ENCODE measurements at regions of chr3 and their contacts with region 1.

Region 1: DNA sequence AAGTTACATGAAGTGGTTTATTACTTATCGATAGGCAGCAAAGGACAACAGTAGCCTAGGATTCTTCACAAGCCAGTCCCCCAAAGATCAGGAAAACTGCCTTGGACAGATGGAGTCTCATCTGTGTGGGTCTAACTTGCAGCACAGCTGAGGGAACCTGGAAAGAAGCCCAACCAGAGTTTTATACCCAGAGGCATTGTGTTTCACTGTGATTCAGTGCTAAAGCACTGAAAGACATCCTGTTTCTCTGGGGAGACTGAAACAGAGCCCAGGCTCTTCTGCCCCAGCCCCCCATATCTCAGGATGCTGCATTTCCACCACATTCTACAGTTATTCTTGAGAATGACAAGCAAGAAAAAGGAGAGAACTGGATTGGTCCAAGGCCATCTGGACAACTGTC is 48.2 kb upstream of the PYDC2 start:
- DNase-seq: no peak
- ATAC-seq: no peak
- H3K4me3 ChIP-seq: no peak overlapping the region
- H3K27ac ChIP-seq: no peak overlapping the region
- H3K4me1 ChIP-seq: no peaks in the 10 kb centered on the region
- H3K27me3 ChIP-seq: no peaks in the 10 kb centered on the region
- CTCF ChIP-seq: no peak
- EP300 ChIP-seq: no peak
- POLR2A ChIP-seq: no peak
- RAD21 ChIP-seq: no peak

Region 2: DNA sequence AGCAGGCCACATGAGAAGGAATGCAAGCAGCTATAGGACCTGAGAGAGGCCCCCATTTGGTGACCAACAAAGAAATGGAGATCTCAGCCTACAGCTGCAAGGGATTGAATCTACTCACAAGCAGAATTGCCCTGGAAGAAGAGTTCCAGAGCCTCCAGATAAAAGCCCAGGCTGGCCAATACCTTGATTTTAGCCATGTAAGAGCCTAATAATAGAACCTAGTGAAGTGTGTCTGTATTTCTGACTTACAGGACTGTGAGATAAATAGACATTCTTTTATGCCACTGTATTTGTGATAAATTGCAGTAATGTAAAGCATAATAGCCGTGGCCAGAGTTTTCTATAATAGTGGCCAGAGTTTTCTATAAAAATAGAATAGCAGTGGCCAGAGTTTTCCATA is 302.8 kb after region 1 on chr3:
- CTCF ChIA-PET with region 1: no interaction called
- POLR2A ChIA-PET with region 1: no interaction called
- in situ Hi-C with region 1: no loop called
- intact Hi-C with region 1: loop called (anchors 5 kb)
- DNase-seq: no peak
- ATAC-seq: no peak
- H3K4me3 ChIP-seq: no peak overlapping the region
- H3K27ac ChIP-seq: no peak overlapping the region
- H3K4me1 ChIP-seq: no peaks in the 10 kb centered on the region
- H3K27me3 ChIP-seq: no peaks in the 10 kb centered on the region
- CTCF ChIP-seq: no peak
- EP300 ChIP-seq: no peak
- POLR2A ChIP-seq: no peak
- RAD21 ChIP-seq: no peak

Region 3: GRCh38 chr3:192038726-192039125 is 626.0 kb after region 1 on chr3:
- CTCF ChIA-PET with region 1: no interaction called
- POLR2A ChIA-PET with region 1: no interaction called
- in situ Hi-C with region 1: no loop called
- intact Hi-C with region 1: loop called (anchors 10 kb)
- DNase-seq: no peak
- ATAC-seq: no peak
- H3K4me3 ChIP-seq: no peak overlapping the region
- H3K27ac ChIP-seq: no peak overlapping the region
- H3K4me1 ChIP-seq: no peaks in the 10 kb centered on the region
- H3K27me3 ChIP-seq: no peaks in the 10 kb centered on the region
- CTCF ChIP-seq: no peak
- EP300 ChIP-seq: no peak
- POLR2A ChIP-seq: no peak
- RAD21 ChIP-seq: no peak

Region 4: DNA sequence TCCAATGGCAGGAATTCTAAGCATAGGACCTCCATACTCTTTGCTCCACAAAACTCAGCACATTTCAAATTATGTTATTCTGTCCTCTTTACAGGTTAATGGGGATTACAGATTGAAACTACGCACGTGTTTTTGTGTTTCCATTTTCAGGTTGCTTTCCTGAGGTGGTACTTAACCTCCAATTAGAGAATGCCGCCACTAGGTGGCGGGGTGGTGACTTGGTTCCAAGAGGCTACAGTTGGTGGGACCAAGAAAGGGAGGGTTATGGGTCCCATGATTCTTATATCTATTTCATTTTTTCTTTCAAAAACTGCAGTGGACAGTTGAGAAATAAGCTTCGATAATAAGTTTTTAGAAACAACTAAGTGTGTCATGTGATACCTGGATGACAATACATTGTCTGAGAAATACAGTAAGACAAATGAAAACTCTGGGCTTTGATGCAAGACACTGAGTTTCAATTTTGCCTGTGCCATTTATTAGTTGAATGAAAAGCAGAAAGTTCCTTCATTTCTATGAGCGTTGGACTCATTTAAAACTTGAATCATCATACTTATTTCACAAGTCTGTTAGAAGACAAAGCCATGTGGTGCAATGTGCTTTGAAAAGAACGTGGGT is 775.6 kb after region 1 on chr3:
- CTCF ChIA-PET with region 1: no interaction called
- POLR2A ChIA-PET with region 1: no interaction called
- in situ Hi-C with region 1: no loop called
- intact Hi-C with region 1: loop called (anchors 5 kb)
- DNase-seq: peak; percentile 27 to 55 (median 50)
- ATAC-seq: peak; percentile 64; the same call in 2 of the 3 replicates
- H3K4me3 ChIP-seq: no peak overlapping the region
- H3K27ac ChIP-seq: no peak overlapping the region
- H3K4me1 ChIP-seq: no peaks in the 10 kb centered on the region
- H3K27me3 ChIP-seq: no peaks in the 10 kb centered on the region
- CTCF ChIP-seq: peak; percentile 17 to 60 (median 49); a peak in 5 of 6 replicates
- EP300 ChIP-seq: no peak
- POLR2A ChIP-seq: no peak
- RAD21 ChIP-seq: peak; percentile 26 to 39